HCT116 (cell line): ENCODE measurements at regions of chr22 and their contacts with region 1.

Region 1: GRCh38 chr22:22748297-22748743 is 103.9 kb downstream of the GGTLC2 start:
- DNase-seq: no peak
- ATAC-seq: peak; percentile 90
- H3K4me3 ChIP-seq: no peak overlapping the region
- H3K27ac ChIP-seq: no peak overlapping the region
- H3K4me1 ChIP-seq: peaks cover 0 to 4% of the 10 kb centered on the region in 2 experiments; a peak in 1 of 4 replicates
- H3K27me3 ChIP-seq: peaks cover 9% of the 10 kb centered on the region; the same call in 1 of the 2 replicates
- CTCF ChIP-seq: peak; percentile 63 to 79 (median 78); a peak in 5 of 6 replicates
- POLR2A ChIP-seq: no peak
- RAD21 ChIP-seq: peak; percentile 47

Region 2: GRCh38 chr22:22588485-22589164 is 159.7 kb before region 1 on chr22:
- CTCF ChIA-PET with region 1: interaction called, 10 read pairs
- POLR2A ChIA-PET with region 1: no interaction called
- RAD21 ChIA-PET with region 1: no interaction called
- intact Hi-C with region 1: no loop called
- DNase-seq: no peak
- ATAC-seq: no peak
- H3K4me3 ChIP-seq: no peak overlapping the region
- H3K27ac ChIP-seq: no peak overlapping the region
- H3K4me1 ChIP-seq: peaks cover 0 to 3% of the 10 kb centered on the region in 2 experiments; a peak in 1 of 4 replicates
- H3K27me3 ChIP-seq: no peaks in the 10 kb centered on the region
- CTCF ChIP-seq: no peak
- POLR2A ChIP-seq: no peak
- RAD21 ChIP-seq: no peak

Region 3: DNA sequence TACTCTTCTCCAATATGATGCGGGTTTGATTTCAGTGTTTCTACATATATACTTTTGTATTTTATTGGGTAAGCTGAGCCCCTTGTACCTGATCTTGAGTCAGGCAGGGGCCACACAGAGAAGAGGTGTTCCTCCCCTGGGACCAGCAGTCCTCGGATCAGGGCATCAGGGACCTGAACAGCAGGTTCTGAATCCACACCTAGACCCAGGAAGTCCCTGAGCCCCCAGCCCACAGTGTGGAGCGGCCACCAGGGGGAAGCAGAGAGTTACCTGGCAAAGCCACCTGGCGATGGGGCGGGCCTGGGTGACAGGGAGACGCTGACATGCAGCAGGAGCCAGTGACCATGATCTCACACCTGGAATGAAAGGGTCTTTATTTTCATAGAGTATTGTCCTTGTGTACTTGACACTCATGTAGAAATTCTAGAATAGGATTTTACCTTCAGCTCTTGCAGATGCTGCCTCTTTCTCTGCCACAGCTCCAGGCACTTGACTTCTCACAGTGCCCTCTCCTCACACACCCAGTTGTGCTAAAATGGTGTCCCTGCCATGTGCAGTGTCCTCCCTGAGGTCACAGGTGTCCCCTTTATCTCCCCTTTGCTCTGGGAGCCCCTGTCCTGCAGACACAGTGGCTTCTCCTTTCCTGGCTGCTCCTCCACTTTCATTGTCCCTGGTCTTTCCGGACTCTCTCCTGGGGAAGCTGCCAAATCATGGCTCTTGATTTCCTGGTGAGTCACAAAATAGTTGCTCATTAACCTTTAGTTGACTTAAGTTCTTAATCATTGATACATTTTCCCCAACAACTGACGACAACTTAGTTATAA is 55.4 kb before region 1 on chr22:
- CTCF ChIA-PET with region 1: interaction called, 10 read pairs
- POLR2A ChIA-PET with region 1: no interaction called
- RAD21 ChIA-PET with region 1: no interaction called
- intact Hi-C with region 1: no loop called
- DNase-seq: no peak
- ATAC-seq: peak; percentile 99
- H3K4me3 ChIP-seq: peak overlapping the region in 1 of 2 experiments; percentile 36; a peak in 2 of 4 replicates
- H3K27ac ChIP-seq: no peak overlapping the region
- H3K4me1 ChIP-seq: peaks cover 10 to 24% of the 10 kb centered on the region in 2 experiments; a peak in 3 of 4 replicates
- H3K27me3 ChIP-seq: no peaks in the 10 kb centered on the region
- CTCF ChIP-seq: peak; percentile 69 to 98 (median 96); a peak in 5 of 6 replicates
- POLR2A ChIP-seq: no peak
- RAD21 ChIP-seq: peak; percentile 42

Region 4: GRCh38 chr22:22720201-22720723 is 28.1 kb before region 1 on chr22:
- CTCF ChIA-PET with region 1: interaction called, 10 read pairs
- POLR2A ChIA-PET with region 1: no interaction called
- RAD21 ChIA-PET with region 1: no interaction called
- intact Hi-C with region 1: no loop called
- DNase-seq: peak; percentile 67
- ATAC-seq: peak; percentile 97
- H3K4me3 ChIP-seq: no peak overlapping the region
- H3K27ac ChIP-seq: no peak overlapping the region; the same call in 1 of the 2 replicates
- H3K4me1 ChIP-seq: peaks cover 0 to 6% of the 10 kb centered on the region in 2 experiments; a peak in 1 of 4 replicates
- H3K27me3 ChIP-seq: no peaks in the 10 kb centered on the region
- CTCF ChIP-seq: peak; percentile 82 to 97 (median 88)
- POLR2A ChIP-seq: no peak
- RAD21 ChIP-seq: peak; percentile 34; the same call in 1 of the 2 replicates